Caco-2 (cell line): ENCODE measurements at regions of chr11 and their contacts with region 1.

Region 1: GRCh38 chr11:2475136-2475918 is 30.5 kb downstream of the KCNQ1 start:
- DNase-seq: peak in 1 of 2 experiments; percentile 5
- H3K4me3 ChIP-seq: no peak overlapping the region
- H3K4me3 Mint-ChIP-seq: no peak overlapping the region
- H3K27ac Mint-ChIP-seq: no peak overlapping the region
- H3K4me1 ChIP-seq: no peaks in the 10 kb centered on the region
- H3K4me1 Mint-ChIP-seq: no peaks in the 10 kb centered on the region
- H3K27me3 ChIP-seq: no peaks in the 10 kb centered on the region
- H3K27me3 Mint-ChIP-seq: peaks cover 2% of the 10 kb centered on the region
- CTCF ChIP-seq: no peak

Region 2: DNA sequence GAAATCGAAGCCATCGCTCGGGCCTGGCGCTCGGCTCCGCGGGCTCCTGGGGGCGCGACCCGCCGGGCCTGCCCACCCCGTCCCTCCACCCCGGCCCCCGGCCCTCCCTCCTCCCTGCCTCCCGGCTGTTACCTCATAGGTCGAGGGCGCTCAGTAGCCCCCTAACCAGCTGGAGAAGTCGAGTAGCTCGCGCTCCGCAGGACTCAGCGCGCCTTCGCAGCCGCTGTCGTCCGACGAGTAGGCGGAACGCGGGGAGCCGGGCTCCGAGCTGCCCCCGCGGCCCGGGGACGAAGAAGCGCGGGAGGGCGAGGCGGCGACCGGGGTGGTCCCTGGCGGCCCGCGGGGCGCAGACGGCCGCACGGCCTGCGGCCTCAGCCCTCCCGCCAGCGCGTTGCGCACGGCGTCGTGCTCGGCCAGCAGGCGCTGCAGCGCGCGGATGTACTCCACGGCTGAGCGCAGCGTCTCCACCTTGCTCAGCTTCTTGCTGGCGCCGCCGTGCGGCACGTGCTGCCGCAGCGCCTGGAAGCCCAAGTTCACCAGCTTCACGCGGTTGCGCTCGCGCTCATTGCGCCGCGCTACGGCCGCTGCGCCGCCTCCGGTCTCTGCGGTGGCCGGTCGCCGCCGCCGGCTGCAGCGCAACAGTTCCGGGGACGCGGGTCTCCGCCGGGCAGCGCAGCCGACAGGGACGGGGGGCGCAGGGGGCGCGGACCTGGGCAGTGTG is 205.6 kb before region 1 on chr11:
- CTCF ChIA-PET with region 1: no interaction called
- POLR2A ChIA-PET with region 1: no interaction called
- intact Hi-C with region 1: no loop called
- DNase-seq: peak; percentile 85 to 87
- H3K4me3 ChIP-seq: peak overlapping the region; percentile 76
- H3K4me3 Mint-ChIP-seq: peak overlapping the region; percentile 87
- H3K27ac Mint-ChIP-seq: peak overlapping the region; percentile 88
- H3K4me1 ChIP-seq: peaks cover 27% of the 10 kb centered on the region
- H3K4me1 Mint-ChIP-seq: peaks cover 10% of the 10 kb centered on the region
- H3K27me3 ChIP-seq: no peaks in the 10 kb centered on the region
- H3K27me3 Mint-ChIP-seq: no peaks in the 10 kb centered on the region
- CTCF ChIP-seq: peak in 1 of 2 experiments; percentile 72

Region 3: DNA sequence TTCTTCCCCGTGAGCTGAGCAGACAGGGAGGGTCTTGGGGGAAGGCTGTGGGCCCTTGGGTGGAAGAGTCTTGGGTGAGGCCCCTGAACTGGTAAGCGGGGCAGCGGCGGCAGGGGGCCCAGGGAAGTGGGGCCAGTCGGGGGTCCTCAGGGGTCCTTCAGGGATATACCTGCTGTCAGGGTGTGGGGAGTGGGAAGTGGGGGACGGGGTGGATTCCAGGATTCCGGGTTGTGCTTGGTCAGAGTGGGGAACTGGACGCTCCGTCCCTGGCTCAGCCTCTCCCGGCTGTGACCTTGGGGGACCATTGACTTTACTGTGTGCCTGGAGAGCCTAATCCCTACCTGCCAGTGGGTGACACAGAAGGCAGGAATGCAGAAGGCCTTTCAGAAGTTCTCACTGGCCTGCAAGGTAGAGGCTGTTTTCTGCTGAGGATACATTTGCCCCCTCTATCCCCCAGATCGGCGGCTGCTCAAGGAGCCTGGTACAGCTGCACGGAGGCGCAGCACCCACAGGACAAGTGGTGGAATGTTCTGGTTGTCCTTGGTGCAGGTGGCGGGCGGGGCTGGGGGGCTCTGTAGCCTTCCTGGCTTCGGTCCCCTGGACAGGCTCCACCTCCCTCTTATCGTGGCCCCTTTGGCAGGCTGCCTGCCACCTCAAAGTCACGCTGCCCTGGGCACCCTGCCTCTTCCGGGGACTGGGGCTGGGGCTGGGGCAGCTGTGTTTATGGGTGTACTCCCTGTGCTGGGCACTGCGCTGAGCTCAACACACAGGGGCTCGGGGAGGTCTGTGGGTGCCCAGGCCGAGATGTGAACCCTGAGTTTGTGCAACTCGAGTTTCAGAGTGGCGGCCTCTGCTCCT is 12.2 kb before region 1 on chr11:
- CTCF ChIA-PET with region 1: no interaction called
- POLR2A ChIA-PET with region 1: no interaction called
- intact Hi-C with region 1: no loop called
- DNase-seq: peak in 1 of 2 experiments; percentile 36
- H3K4me3 ChIP-seq: no peak overlapping the region
- H3K4me3 Mint-ChIP-seq: no peak overlapping the region
- H3K27ac Mint-ChIP-seq: no peak overlapping the region
- H3K4me1 ChIP-seq: peaks cover 6% of the 10 kb centered on the region
- H3K4me1 Mint-ChIP-seq: no peaks in the 10 kb centered on the region
- H3K27me3 ChIP-seq: no peaks in the 10 kb centered on the region
- H3K27me3 Mint-ChIP-seq: no peaks in the 10 kb centered on the region
- CTCF ChIP-seq: no peak

Region 4: GRCh38 chr11:2511421-2512369 is 36.4 kb after region 1 on chr11:
- CTCF ChIA-PET with region 1: no interaction called
- POLR2A ChIA-PET with region 1: no interaction called
- intact Hi-C with region 1: loop called (anchors 5 kb)
- DNase-seq: peak in 1 of 2 experiments; percentile 26
- H3K4me3 ChIP-seq: no peak overlapping the region
- H3K4me3 Mint-ChIP-seq: no peak overlapping the region
- H3K27ac Mint-ChIP-seq: no peak overlapping the region
- H3K4me1 ChIP-seq: peaks cover 7% of the 10 kb centered on the region; the same call in 1 of the 2 replicates
- H3K4me1 Mint-ChIP-seq: peaks cover 7% of the 10 kb centered on the region
- H3K27me3 ChIP-seq: no peaks in the 10 kb centered on the region
- H3K27me3 Mint-ChIP-seq: peaks cover 16% of the 10 kb centered on the region
- CTCF ChIP-seq: no peak